Adrenal gland (tissue), 19 donors: ENCODE measurements at regions of chr11 and their contacts with region 1.

Region 1: GRCh38 chr11:48109046-48109666 is 107.5 kb upstream of the OR4B1 start:
- DNase-seq: no peak
- H3K4me3 ChIP-seq: peak overlapping the region in 2 of 4 donors; percentile 16 to 41
- H3K27ac ChIP-seq: peak overlapping the region in 3 of 5 donors; percentile 33 to 81 (median 58)
- H3K4me1 ChIP-seq: peaks cover 5 to 16% of the 10 kb centered on the region in 2 donors
- H3K27me3 ChIP-seq: no peaks in the 10 kb centered on the region
- CTCF ChIP-seq: peak in 5 of 6 experiments; percentile 17 to 39 (median 29)
- POLR2A ChIP-seq: no peak

Region 2: DNA sequence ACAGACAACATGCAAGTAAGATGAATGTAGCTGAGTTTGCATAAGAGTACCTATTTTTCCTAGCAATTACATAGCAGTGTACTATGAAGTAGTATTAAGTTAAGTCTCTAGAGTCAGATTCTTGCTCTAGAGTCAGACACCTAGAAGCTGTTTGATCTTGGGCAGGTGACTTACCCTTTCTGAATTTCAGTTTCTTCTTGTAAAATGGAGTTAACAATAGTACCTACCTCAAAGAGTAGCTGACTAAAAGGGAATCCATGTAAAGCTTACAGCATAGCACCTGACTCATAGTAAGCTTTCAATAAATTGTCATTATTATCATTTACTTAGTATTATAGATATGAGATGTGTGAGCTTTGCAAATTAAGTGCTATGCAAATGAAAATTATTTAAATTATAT is 176.6 kb before region 1 on chr11:
- intact Hi-C with region 1: loop called (anchors 2 to 5 kb)
- DNase-seq: no peak
- H3K4me3 ChIP-seq: no peak overlapping the region
- H3K27ac ChIP-seq: no peak overlapping the region
- H3K4me1 ChIP-seq: peaks cover 0 to 3% of the 10 kb centered on the region in 2 donors
- H3K27me3 ChIP-seq: no peaks in the 10 kb centered on the region
- CTCF ChIP-seq: no peak
- POLR2A ChIP-seq: no peak

Region 3: GRCh38 chr11:47938791-47939560 is 170.2 kb before region 1 on chr11:
- intact Hi-C with region 1: loop called (anchors 2 to 5 kb)
- DNase-seq: no peak
- H3K4me3 ChIP-seq: no peak overlapping the region
- H3K27ac ChIP-seq: no peak overlapping the region
- H3K4me1 ChIP-seq: peaks cover 0 to 3% of the 10 kb centered on the region in 2 donors
- H3K27me3 ChIP-seq: no peaks in the 10 kb centered on the region
- CTCF ChIP-seq: no peak
- POLR2A ChIP-seq: no peak

Region 4: GRCh38 chr11:48028914-48029680 is 80.1 kb before region 1 on chr11:
- intact Hi-C with region 1: no loop called
- DNase-seq: no peak
- H3K4me3 ChIP-seq: no peak overlapping the region
- H3K27ac ChIP-seq: peak overlapping the region in 1 of 5 donors; percentile 44
- H3K4me1 ChIP-seq: peaks cover 0 to 28% of the 10 kb centered on the region in 2 donors
- H3K27me3 ChIP-seq: no peaks in the 10 kb centered on the region
- CTCF ChIP-seq: no peak
- POLR2A ChIP-seq: no peak